Left cardiac atrium (tissue), 4 donors: ENCODE measurements at regions of chr11 and their contacts with region 1.

Region 1: GRCh38 chr11:107689317-107690202 is 22.3 kb downstream of the SLN start:
- DNase-seq: peak; percentile 77
- ATAC-seq: peak; percentile 87 to 88

Region 2: GRCh38 chr11:107565219-107565937 is 124.2 kb before region 1 on chr11 and contains the start of gene ALKBH8:
- intact Hi-C with region 1: loop called in 1 of 2 experiments (anchors 5 kb)
- DNase-seq: peak; percentile 82
- ATAC-seq: peak; percentile 97 to 98
- total RNA-seq, gene ALKBH8: 6.3 to 6.5 TPM

Region 3: DNA sequence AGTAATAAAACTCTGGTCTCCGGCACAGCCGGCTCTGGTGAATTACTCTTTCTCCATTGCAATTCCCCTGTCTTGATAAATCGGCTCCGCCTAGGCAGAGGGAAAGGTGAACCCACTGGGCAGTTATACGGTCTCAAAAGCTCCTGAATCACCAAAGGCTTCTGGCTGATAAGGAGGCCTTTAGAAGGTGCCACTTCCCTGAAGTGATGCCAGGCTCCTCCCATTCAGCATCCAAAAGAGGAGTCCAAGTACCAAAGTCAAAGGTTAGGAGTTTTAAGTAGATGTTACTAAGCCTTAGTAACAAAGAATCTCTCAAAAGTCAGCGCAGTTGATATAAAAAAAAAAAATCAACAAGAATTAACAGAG is 112.2 kb before region 1 on chr11:
- intact Hi-C with region 1: loop called (anchors 2 to 5 kb)
- DNase-seq: no peak
- ATAC-seq: no peak

Region 4: DNA sequence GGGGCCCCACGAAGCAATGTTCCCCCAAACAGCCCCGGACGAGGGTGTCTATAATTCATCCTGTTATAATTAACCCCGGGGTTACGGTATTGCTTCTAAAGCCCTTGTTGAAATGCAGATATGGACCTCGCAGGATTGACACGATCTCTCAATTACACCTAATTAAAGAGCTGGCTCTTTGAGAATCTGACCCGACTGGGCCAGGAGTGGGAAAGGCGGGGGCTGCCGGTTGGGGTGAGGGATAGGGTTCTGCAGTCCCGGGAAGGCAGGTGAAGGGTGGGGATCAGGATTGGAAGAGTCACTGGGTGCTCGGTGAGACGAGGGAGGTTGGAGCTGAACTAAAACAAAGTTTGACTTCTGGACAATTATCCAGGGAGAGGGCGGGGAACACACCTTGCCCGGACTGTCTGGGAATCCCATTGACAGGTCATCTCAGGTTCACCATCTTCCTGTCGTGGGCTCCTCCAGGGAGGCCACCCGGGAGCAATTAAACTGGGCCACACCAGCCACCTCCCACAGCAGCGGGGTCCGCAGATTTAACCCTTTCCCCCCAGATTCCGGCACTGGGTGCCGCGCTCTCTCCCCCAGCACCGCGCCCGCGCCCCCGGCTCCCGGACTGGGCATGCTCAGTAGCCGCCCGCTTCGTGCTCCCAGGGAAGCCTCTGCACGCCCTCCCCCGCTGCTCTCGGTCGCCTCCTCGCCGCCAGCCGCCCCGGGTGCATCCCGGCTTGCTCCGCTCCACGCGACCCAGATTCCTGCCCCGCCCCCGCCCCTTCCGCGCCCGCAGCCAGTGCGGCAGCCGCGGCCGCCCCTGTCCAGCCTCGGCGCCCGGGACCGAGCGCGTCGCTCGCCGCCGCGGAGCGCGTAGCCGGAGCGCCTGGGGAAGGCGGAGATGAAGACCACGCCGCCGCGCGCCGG is 98.8 kb before region 1 on chr11 and contains the start of gene ELMOD1:
- intact Hi-C with region 1: no loop called
- DNase-seq: peak; percentile 60
- ATAC-seq: peak; percentile 89 to 95
- total RNA-seq, gene ELMOD1: 7.3 to 9.9 TPM

Region 5: DNA sequence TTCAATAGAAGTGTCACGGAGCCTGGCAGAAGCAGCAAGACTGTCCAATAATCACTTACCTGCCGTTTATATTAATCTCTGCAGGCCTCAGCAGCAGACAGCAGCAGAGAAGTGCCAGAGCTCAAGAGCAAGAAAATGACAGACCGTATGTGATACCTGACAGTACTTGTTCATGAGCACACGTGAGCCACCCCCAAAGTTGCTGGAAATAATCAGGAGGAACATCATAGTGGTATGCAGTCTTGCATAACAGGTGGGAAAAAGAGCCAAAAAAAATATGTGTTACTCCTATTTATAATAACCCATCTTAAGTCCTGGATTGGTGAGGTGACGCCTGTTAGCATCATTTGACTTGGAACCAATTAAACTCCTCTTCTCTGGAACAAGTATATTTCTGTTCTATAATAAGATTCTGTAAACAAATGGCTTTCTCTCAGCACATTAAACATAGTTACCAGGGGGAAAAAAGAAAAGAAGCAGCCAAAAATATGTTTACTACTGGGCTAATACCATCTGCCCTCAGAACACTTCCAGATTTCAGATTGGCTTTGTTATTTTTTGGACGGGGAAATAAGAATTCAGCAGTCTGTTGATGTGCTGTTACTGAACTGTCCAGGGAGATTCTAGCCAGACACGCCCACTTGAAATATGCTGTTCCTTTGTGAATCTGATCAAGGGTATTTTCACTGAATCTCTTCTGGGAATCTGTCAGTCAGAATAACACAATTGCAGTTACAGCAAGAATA is 30.2 kb after region 1 on chr11:
- intact Hi-C with region 1: no loop called
- DNase-seq: no peak
- ATAC-seq: peak in 1 of 2 donors; percentile 65